GM10248 (cell line): ENCODE measurements at regions of chr5 and their contacts with region 1.

Region 1: DNA sequence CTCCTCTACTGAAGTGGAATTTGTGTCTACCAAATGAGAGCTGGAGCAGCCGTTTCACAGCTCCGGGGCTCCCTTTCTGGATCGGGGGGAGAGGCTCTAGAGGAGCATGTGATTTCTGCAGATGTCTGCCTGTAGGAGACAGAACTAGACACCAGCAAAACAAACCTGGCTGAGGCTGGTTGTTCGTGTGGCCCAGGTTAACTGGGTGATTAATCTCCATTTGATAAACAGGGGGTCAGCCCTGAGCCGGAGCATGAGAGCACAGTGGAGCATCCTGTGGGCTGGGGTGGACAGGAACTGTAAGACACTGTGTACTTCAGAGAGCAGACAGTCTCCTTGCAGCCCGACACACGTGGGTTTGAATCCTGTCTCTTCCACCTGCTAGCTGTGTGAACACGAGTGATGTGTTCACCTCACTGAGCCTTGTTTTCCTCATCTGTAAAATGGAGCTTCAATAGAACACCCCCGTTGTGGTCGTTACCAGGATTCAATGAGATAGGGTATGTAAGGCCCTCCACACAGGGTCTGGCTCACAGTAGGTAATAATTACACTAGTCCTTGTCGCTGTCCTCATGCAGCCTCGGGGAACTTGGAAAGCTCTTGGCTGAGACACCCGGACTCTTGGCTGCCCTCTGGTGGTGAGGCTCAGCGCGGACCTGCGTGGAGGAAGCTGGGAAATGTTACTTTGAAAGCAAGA is 12.9 kb downstream of the CXCL14 start:
- DNase-seq: peak; percentile 75
- CTCF ChIP-seq: peak; percentile 90

Region 2: GRCh38 chr5:135063631-135064570 is 502.0 kb before region 1 on chr5:
- CTCF ChIA-PET with region 1: no interaction called
- POLR2A ChIA-PET with region 1: no interaction called
- DNase-seq: no peak
- CTCF ChIP-seq: no peak

Region 3: DNA sequence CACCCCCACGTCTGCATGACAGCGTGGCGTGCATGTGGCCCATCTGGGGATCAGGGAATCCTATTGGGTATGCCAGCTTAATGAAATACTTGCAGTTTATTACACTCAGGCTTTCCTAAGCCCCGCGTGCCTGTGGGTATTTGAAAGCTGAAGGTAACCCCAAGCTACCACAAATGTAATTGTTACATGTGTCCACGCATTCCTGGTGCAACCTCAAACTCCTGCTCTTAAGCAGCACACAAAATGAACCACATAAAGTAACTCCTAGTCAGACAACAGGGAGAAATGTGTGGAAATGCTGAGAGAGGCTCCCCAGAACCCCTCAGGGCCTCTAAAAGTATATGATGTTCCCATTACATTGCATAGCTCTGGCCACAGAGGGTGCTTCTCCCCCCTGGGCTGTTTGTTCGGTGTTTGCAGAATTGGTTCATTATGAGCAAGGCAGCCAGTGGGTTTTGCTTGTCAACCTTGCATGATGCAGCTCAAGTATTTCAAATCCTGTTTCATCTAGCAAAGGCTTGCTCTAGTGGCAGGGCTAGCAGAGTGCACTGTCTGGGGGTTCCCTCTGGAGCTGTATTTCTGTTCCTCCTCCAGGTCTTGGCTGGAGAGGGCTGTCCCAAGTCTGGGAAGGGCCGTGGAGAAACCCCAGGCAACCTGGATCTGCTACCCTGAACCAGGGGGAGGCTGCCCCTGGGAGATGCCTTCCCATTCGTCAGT is 116.9 kb before region 1 on chr5:
- CTCF ChIA-PET with region 1: interaction called, 914 read pairs
- POLR2A ChIA-PET with region 1: no interaction called
- DNase-seq: no peak
- CTCF ChIP-seq: no peak

Region 4: GRCh38 chr5:135551593-135552447 is 14.1 kb before region 1 on chr5:
- CTCF ChIA-PET with region 1: interaction called, 189 read pairs
- POLR2A ChIA-PET with region 1: no interaction called
- DNase-seq: peak; percentile 75
- CTCF ChIP-seq: peak; percentile 69

Region 5: GRCh38 chr5:135578685-135579341 is 12.9 kb after region 1 on chr5 and contains the start of gene CXCL14:
- CTCF ChIA-PET with region 1: interaction called, 31 read pairs
- POLR2A ChIA-PET with region 1: no interaction called
- DNase-seq: no peak
- CTCF ChIP-seq: no peak

Region 6: DNA sequence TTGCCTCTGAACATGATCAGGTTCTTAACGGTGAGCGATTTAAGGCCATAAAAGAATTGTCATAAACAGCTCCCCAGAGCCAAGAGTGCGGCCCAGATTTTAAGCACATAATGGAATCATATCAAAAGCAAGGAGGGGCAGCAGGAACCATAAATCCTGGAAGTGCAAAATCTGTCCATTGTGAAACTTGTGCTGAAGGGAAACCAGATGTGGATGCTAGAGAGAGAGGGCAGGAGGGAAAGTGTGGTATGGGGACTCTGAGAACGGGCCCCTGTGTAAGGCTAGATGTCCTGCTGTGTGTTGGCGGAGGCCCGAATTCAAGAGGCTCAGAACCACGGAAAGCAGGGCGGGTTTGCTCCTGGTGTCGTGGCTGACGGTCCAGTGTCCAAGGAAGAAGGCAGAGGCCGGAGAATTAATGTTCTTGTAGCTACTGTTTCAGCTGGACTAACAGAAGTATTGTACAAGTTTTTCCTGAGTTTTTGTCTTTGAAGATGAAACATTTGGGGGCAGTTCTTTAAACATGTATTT is 21.9 kb after region 1 on chr5:
- CTCF ChIA-PET with region 1: interaction called, 13 read pairs
- POLR2A ChIA-PET with region 1: no interaction called
- DNase-seq: no peak
- CTCF ChIP-seq: no peak